Dorsolateral prefrontal cortex (tissue), 120 donors: ENCODE measurements at regions of chr9 and their contacts with region 1.

Region 1: DNA sequence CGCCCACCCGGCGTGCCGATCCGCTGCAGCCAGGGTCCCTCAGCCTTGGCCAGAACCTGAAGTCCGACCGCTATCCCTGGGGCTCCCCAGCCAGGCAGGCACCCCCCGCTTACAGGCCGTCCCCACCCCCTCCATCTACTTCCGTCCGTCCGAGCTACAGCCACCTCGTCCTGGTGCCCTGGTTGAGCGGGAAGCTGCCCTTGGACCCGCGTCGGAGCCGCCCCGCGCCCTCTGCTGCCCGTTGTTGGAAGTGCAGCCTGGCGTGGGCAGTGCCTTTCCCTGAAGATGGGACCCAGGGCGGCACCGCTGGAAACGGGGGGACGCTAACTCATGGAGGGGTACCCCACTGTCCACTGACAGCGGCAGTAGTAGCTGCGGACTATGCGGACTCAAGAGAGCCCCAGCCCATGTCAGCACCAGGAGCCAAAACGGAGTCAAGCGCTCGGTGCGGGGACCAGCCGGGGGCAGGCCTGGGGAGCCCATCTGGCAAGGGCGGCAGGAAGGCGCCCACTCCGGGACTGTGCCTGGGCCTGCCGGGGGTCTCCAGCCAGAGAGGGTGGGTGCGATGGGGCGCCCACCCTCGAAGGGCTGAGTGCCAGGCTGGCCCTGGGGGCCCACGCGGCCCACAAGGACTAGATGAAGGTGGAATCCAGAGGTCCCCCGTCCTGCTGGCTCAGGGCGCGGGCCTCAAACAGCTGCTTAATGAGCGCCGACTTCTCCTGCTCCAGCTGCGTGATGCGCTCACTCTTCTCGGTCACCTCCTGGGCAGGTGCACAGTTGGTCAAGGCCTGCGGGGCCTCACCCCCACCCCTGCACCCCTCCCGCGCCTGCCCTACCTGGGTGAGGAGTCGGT is 6.1 kb downstream of the SAPCD2 start:
- DNase-seq: peak in 6 of 10 donors; percentile 55 to 83 (median 72)
- H3K4me3 ChIP-seq: peak overlapping the region in 12 of 59 donors; percentile 1 to 32 (median 12)
- H3K27ac ChIP-seq: peak overlapping the region in 4 of 59 donors; percentile 19 to 45 (median 38)
- H3K27me3 ChIP-seq: peaks cover 0 to 3% (median 0%) of the 10 kb centered on the region in 45 donors
- CTCF ChIP-seq: peak; percentile 64 to 99 (median 94)

Region 2: GRCh38 chr9:137046098-137046787 is 18.0 kb before region 1 on chr9 and contains the start of gene NPDC1:
- intact Hi-C with region 1: loop called (anchors 1 to 2 kb)
- DNase-seq: peak; percentile 67 to 83 (median 72)
- H3K4me3 ChIP-seq: peak within 1 kb of the TSS; percentile 56 to 85 (median 71)
- H3K27ac ChIP-seq: peak within 1 kb of the TSS in 55 of 59 donors; percentile 29 to 92 (median 79)
- H3K27me3 ChIP-seq: peaks cover 0 to 30% (median 17%) of the 10 kb centered on the region in 45 donors
- CTCF ChIP-seq: peak; percentile 58 to 94 (median 85)
- total RNA-seq, gene NPDC1: 142 to 297 (median 214) TPM